A549 (cell line): ENCODE measurements at regions of chr14 and their contacts with region 1.

Region 1: DNA sequence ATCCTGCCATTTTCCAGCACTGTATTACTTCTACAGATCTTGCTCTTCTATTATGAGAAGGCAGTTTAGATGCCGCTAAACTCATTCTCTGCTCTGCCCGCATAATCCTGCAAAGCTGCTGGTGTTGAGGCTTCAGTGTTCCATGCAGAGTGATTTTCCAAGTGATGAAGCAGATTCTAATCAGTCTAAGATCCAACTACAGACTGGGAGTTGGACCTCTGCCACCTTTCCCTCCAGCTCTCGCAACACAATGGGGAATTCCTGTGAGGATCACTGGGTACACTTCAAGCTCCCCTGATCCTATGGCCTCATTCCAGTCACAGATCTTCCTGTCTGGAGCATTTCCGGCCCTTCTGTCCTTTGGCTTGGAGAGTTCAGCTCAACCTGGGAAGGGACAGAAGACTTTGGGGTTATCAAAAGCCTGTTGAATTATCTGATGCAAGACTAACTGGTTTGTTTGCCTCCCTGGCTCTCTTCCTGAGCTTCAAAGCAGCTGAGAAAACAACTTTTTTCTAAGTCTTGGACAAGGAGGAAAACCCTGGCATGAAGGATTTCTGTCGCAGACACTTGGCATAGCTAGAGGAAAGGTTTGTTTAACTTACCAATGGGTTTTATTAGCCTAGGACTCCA is 333.9 kb downstream of the ZFP36L1 start:
- DNase-seq: peak; percentile 96 to 100
- ATAC-seq: peak; percentile 98 to 99
- H3K4me3 ChIP-seq: no peak overlapping the region
- H3K27ac ChIP-seq: peak overlapping the region; percentile 95 to 100
- H3K4me1 ChIP-seq: peaks cover 59% of the 10 kb centered on the region
- CTCF ChIP-seq: no peak
- EP300 ChIP-seq: peak; percentile 99
- POLR2A ChIP-seq: no peak
- RAD21 ChIP-seq: peak; percentile 52 to 92

Region 2: DNA sequence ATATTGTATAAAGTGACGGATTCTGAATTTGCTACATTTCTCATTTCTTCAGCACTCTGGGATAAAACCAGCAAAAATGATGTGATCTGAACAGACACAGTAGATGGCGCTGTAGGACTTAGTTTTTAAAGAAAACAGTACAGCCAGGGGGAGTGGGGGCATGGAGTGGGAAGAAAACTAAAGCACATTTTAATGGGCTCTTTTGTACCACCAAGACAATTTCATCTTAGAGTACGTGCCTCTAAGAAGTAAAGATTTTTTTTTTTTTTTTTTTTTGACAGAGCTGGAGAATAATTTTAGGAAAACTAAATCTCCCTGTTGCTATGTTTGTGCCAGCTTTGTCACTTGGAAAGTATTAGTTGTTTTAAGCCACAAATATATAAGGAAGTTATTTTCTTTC is 515.0 kb before region 1 on chr14:
- CTCF ChIA-PET with region 1: interaction called, 7 read pairs
- POLR2A ChIA-PET with region 1: interaction called, 13 read pairs
- DNase-seq: peak; percentile 44 to 92
- ATAC-seq: peak; percentile 88 to 89
- H3K4me3 ChIP-seq: no peak overlapping the region
- H3K27ac ChIP-seq: peak overlapping the region; percentile 82 to 86
- H3K4me1 ChIP-seq: peaks cover 51% of the 10 kb centered on the region
- CTCF ChIP-seq: peak; percentile 93
- EP300 ChIP-seq: peak in 1 of 2 experiments; percentile 18; a peak in 1 of 5 replicates
- POLR2A ChIP-seq: no peak
- RAD21 ChIP-seq: peak; percentile 96 to 98

Region 3: GRCh38 chr14:68248481-68249255 is 210.3 kb before region 1 on chr14:
- CTCF ChIA-PET with region 1: interaction called, 24 read pairs
- POLR2A ChIA-PET with region 1: interaction called, 14 read pairs
- DNase-seq: peak; percentile 61 to 86
- ATAC-seq: peak; percentile 81 to 84
- H3K4me3 ChIP-seq: no peak overlapping the region
- H3K27ac ChIP-seq: peak overlapping the region; percentile 95 to 97
- H3K4me1 ChIP-seq: peaks cover 76% of the 10 kb centered on the region
- CTCF ChIP-seq: peak; percentile 83
- EP300 ChIP-seq: no peak
- POLR2A ChIP-seq: no peak
- RAD21 ChIP-seq: peak; percentile 93 to 97

Region 4: DNA sequence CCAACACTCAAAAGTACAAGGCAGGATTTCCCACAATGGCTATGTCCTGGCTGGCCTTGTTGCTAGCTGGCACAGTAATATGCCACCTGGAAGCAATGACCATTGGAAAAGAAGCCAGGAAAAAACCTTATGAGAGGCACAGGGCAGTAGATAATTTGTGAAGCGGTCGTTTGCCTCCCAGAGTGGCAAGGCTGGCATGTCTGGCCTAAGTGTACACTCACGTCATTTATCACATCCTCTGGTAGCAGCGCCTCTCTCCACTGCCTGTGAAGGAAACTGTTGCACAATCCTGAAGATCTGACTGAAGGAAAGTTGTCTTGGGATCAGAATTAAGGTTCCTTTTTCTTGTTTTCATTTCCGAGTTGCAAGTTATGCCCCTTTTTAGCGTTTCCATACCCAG is 74.6 kb before region 1 on chr14:
- CTCF ChIA-PET with region 1: no interaction called
- POLR2A ChIA-PET with region 1: no interaction called
- DNase-seq: no peak
- ATAC-seq: no peak
- H3K4me3 ChIP-seq: no peak overlapping the region
- H3K27ac ChIP-seq: peak overlapping the region; percentile 10 to 11; a peak in 1 of 6 replicates
- H3K4me1 ChIP-seq: peaks cover 28% of the 10 kb centered on the region
- CTCF ChIP-seq: no peak
- EP300 ChIP-seq: no peak
- POLR2A ChIP-seq: no peak
- RAD21 ChIP-seq: no peak

Region 5: DNA sequence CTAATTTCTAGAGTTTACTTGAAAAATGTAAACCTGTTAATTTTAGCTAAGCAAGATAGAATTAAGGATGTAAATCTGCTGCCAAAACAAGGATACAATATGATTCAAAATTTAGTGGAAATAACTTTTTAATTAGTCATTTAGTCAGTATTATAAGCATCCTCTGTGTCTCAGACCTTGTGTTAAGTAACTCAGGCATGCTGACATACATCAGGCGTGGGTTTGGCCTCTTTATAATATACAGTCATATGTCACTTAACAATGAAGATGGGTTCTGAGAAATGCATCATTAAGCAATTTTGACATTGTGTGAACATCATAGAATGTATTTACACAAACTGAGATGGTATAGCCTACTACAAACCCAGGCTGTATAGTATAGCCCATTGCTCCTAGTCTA is 53.0 kb before region 1 on chr14:
- CTCF ChIA-PET with region 1: no interaction called
- POLR2A ChIA-PET with region 1: no interaction called
- DNase-seq: no peak
- ATAC-seq: 0 out of 6 replicates have a peak, but pooled peaks of 1 of the 2 experiments have one; percentile 24
- H3K4me3 ChIP-seq: no peak overlapping the region
- H3K27ac ChIP-seq: peak overlapping the region in 1 of 2 experiments; percentile 32; a peak in 1 of 6 replicates
- H3K4me1 ChIP-seq: peaks cover 25% of the 10 kb centered on the region
- CTCF ChIP-seq: no peak
- EP300 ChIP-seq: no peak
- POLR2A ChIP-seq: no peak
- RAD21 ChIP-seq: no peak

Region 6: GRCh38 chr14:68440820-68441219 is 18.1 kb before region 1 on chr14:
- CTCF ChIA-PET with region 1: no interaction called
- POLR2A ChIA-PET with region 1: no interaction called
- DNase-seq: peak in 1 of 2 experiments; percentile 16
- ATAC-seq: no peak
- H3K4me3 ChIP-seq: no peak overlapping the region
- H3K27ac ChIP-seq: peak overlapping the region in 1 of 2 experiments; percentile 38; a peak in 2 of 6 replicates
- H3K4me1 ChIP-seq: peaks cover 15% of the 10 kb centered on the region
- CTCF ChIP-seq: no peak
- EP300 ChIP-seq: no peak
- POLR2A ChIP-seq: no peak
- RAD21 ChIP-seq: no peak

Region 7: DNA sequence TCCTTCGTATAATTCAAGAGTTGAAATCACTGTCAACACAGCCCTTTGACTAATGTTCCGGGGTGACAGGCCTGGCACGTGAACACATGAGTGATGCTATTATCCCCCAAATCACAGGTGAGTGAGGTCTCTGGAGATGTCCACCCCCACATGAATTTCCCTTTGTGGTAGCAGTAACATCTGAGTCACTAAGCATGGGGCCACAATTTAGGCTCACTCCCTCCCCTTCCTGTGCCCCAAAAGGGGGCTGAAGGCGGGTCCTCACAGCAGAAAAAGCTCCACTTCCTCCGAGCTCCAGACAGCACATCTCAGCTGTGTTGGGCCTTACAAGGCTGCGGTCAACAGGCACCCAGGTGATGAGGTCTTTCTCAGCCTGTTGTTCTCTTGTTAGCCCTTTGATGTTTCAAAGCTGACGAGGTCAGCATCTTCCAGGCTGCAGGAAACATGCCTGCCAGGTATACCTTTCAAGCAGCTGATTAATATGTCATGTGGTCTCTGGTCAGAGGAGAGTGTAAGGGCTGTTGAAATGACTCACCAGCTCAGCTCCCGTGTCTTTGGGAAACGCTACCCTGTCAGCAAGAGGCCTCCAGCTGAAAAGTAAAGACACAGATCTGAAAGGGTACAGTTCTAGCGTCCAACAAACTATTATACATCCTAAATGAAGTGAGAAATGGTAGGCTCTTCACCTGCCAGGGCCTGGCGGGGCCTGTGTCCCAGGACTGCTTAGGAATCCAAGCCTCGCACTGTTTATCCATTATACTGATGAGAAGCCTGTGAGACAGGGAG is 226.7 kb after region 1 on chr14:
- CTCF ChIA-PET with region 1: no interaction called
- POLR2A ChIA-PET with region 1: interaction called, 14 read pairs
- DNase-seq: no peak
- ATAC-seq: no peak
- H3K4me3 ChIP-seq: no peak overlapping the region
- H3K27ac ChIP-seq: peak overlapping the region; percentile 86 to 94
- H3K4me1 ChIP-seq: peaks cover 63% of the 10 kb centered on the region
- CTCF ChIP-seq: no peak
- EP300 ChIP-seq: no peak
- POLR2A ChIP-seq: no peak
- RAD21 ChIP-seq: no peak

Region 8: GRCh38 chr14:68780358-68781160 is 321.6 kb after region 1 on chr14:
- CTCF ChIA-PET with region 1: interaction called, 4 read pairs
- POLR2A ChIA-PET with region 1: interaction called, 57 read pairs
- DNase-seq: peak in 1 of 2 experiments; percentile 53
- ATAC-seq: no peak
- H3K4me3 ChIP-seq: no peak overlapping the region
- H3K27ac ChIP-seq: peak overlapping the region; percentile 94 to 100
- H3K4me1 ChIP-seq: peaks cover 71% of the 10 kb centered on the region
- CTCF ChIP-seq: no peak
- EP300 ChIP-seq: no peak
- POLR2A ChIP-seq: no peak
- RAD21 ChIP-seq: no peak